K562 (cell line): ENCODE measurements at regions of chr15 and their contacts with region 1.

Region 1: DNA sequence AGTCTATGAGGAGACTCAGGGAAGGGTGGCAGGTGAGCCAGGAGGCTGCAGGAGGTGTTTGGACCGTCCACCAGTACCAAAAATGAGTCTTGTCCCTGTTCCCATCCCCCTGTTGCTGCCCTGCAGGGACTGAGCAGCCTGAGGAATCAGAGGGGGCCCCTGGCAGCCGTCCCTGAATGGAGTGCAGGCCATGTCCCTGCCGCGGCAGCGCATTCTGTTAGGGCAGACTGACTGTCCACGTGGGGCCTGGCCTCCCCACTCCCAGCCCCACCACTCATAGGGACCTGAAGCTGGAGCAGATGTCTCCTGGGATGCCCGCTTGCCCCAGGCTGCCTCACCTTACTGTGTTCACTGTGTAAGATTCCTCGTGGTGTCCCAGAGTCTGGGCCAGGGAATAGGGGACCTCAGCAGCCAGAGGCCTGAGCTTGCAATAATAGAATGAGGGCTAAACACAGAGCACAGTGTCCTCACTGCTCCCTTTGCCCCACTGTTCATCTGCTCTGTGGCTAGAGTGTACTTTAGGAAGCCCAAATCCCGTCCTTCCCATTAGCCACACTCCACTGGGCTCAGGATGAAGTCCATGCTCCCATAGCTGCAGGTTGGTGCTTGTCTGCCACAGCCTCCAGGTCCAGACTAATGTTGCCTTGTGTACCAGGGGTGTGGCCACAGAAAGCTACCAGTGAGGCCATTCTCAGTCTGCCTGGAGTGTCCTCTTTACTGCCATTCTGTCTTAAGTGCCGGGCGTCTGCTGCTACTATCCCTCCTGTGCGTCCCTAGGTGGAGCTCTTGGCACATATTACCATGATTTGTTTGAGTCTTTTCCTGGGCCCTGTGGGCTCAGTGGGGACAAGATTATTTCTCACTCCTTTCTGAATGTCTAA is 63.2 kb downstream of the HCN4 start:
- DNase-seq: peak; percentile 26 to 74 (median 46)
- ATAC-seq: peak; percentile 93
- H3K4me3 ChIP-seq: no peak overlapping the region
- H3K27ac ChIP-seq: no peak overlapping the region
- H3K4me1 ChIP-seq: no peaks in the 10 kb centered on the region; a peak in 1 of 5 replicates
- H3K27me3 ChIP-seq: peaks cover 24 to 40% of the 10 kb centered on the region in 2 experiments; a peak in 4 of 5 replicates
- CTCF ChIP-seq: peak; percentile 74 to 82 (median 77)
- EP300 ChIP-seq: no peak
- POLR2A ChIP-seq: no peak
- RAD21 ChIP-seq: peak; percentile 61 to 81

Region 2: DNA sequence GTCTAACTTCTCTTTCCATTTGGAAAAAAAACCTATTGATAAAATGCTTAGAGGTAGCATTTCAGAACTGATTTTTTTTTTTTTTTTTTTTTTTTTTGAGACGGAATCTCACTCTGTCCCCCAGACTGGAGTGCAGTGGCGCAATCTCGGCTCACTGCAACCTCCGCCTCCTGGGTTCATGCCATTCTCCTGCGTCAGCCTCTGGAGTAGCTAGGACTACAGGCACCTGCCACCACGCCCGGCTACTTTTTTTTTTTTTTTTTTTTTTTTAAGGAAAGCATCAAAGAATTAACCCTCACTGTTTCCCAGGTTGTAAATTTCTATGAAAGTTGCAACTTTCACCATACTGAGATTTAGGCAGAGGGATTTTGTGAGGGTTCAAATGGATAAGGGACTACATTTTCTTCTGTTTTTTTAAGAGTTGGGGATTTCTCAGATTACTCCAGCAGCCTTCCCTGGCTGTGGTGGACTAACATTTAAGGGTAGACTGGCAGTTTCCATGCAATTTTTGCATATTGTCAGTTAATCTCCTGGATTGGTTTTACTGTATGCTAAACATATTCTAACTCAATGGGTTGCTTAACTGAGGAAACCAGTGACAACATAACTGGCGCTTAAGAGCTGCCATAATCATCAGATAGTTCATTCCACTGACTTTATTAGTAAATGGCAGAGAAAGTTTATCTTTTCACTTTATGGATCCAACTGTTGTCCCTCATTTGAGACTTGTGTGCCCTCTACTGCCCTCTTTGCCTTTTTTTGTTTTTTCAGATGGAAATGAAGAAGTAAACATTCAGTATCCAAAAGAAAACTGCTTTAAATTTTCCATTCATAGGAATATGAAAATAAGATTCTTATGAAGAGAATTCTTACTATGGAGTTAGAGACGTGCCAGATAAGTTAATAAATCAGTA is 233.9 kb after region 1 on chr15:
- CTCF ChIA-PET with region 1: no interaction called
- POLR2A ChIA-PET with region 1: no interaction called
- in situ Hi-C with region 1: loop called (anchors 10 kb)
- intact Hi-C with region 1: no loop called
- DNase-seq: no peak
- ATAC-seq: no peak
- H3K4me3 ChIP-seq: no peak overlapping the region
- H3K27ac ChIP-seq: no peak overlapping the region
- H3K4me1 ChIP-seq: no peaks in the 10 kb centered on the region
- H3K27me3 ChIP-seq: peaks cover 0 to 6% of the 10 kb centered on the region in 2 experiments; a peak in 2 of 5 replicates
- CTCF ChIP-seq: peak in 2 of 3 experiments; percentile 16 to 35; a peak in 1 of 6 replicates
- EP300 ChIP-seq: no peak
- POLR2A ChIP-seq: no peak
- RAD21 ChIP-seq: peak in 1 of 2 experiments; percentile 58; a peak in 2 of 4 replicates

Region 3: GRCh38 chr15:73550190-73550589 is 244.6 kb after region 1 on chr15:
- CTCF ChIA-PET with region 1: no interaction called
- POLR2A ChIA-PET with region 1: no interaction called
- in situ Hi-C with region 1: loop called (anchors 10 kb)
- intact Hi-C with region 1: loop called (anchors 5 kb)
- DNase-seq: no peak
- ATAC-seq: no peak
- H3K4me3 ChIP-seq: no peak overlapping the region
- H3K27ac ChIP-seq: no peak overlapping the region
- H3K4me1 ChIP-seq: no peaks in the 10 kb centered on the region
- H3K27me3 ChIP-seq: no peaks in the 10 kb centered on the region
- CTCF ChIP-seq: no peak
- EP300 ChIP-seq: no peak
- POLR2A ChIP-seq: no peak
- RAD21 ChIP-seq: no peak